Heart left ventricle (tissue), 16 donors: ENCODE measurements at regions of chr7 and their contacts with region 1.

Region 1: DNA sequence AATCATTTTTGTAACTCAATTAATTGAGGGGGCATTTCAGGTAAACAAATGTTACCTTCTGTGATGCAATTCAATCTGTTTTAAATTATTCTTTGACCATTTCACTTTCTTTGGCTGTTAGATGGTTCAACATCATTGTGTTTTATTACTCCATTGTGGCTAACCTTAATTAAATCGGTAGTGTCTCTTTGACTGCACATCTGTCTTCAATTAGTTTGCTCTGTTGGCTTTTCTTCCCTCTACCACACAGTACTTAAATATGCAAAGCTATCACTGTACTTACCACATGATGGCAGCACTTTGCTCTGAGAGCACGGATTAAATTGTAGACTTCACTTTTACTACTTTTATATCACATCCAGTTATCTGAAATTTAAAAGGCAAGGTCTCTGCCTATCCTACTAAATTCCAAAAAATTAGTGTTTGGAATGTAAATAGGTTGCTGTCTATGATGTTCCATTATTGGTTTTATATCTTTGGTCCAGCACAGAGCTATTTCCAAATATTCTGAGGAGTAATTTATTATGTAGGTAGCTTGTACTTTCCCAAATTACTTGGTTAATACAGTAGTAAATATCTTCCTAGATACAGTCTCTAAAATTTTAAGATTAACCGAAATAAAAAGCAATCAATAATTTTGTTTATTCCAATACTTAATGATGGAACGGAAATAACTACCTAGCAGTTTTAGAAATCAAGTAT is 352.0 kb downstream of the PCLO start:
- DNase-seq: no peak
- ATAC-seq: peak in 2 of 4 donors; percentile 55 to 61
- H3K4me3 ChIP-seq: no peak overlapping the region
- H3K27ac ChIP-seq: no peak overlapping the region
- H3K4me1 ChIP-seq: no peaks in the 10 kb centered on the region
- H3K27me3 ChIP-seq: no peaks in the 10 kb centered on the region
- CTCF ChIP-seq: peak; percentile 30 to 67 (median 47)
- POLR2A ChIP-seq: no peak

Region 2: DNA sequence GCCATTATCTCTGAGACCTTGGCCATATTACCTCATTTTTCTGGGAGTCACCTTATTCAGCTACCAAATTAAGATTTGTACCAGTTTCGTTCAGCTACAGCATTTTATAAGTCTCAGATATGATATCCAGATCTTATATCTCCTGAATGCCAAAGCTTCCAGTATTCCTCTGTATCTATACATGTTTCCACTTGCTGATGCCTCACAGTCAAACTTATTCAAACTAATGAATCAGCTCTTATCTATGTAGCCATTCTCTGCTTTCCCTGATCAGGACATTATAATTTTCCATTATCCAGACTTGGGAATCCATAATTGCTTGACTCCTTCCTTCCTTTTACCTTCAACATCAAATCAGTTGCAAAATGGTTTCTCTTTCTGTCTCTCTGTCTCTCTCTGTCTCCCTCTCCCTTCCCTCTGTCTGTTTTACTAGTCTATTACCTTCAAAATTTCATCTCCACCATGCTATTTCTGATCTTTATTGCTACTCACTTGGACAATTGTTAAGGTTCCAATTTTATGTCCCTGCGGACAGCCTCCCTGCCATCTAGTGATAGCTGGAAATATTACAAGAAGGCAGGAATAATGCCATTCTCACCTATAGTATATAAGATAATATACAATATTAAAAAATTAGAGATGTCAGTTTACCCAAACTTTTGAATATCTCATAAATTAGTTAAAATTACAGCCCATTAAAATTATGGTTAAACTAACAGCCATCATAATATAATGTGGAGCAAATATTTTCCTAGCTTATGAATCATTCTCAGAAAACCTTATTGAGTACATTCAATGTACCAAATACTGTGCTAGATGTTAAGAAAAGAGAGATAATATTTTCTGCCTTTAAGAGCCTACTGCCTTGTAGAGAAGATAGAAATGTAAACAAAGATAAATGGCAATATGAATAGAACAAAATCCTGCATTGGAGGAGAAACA is 262.1 kb after region 1 on chr7:
- intact Hi-C with region 1: loop called in 1 of 10 experiments (anchors 10 kb)
- DNase-seq: no peak
- ATAC-seq: no peak
- H3K4me3 ChIP-seq: no peak overlapping the region
- H3K27ac ChIP-seq: no peak overlapping the region
- H3K4me1 ChIP-seq: no peaks in the 10 kb centered on the region
- H3K27me3 ChIP-seq: no peaks in the 10 kb centered on the region
- CTCF ChIP-seq: peak in 3 of 12 donors; percentile 15 to 17 (median 16)
- POLR2A ChIP-seq: no peak

Region 3: DNA sequence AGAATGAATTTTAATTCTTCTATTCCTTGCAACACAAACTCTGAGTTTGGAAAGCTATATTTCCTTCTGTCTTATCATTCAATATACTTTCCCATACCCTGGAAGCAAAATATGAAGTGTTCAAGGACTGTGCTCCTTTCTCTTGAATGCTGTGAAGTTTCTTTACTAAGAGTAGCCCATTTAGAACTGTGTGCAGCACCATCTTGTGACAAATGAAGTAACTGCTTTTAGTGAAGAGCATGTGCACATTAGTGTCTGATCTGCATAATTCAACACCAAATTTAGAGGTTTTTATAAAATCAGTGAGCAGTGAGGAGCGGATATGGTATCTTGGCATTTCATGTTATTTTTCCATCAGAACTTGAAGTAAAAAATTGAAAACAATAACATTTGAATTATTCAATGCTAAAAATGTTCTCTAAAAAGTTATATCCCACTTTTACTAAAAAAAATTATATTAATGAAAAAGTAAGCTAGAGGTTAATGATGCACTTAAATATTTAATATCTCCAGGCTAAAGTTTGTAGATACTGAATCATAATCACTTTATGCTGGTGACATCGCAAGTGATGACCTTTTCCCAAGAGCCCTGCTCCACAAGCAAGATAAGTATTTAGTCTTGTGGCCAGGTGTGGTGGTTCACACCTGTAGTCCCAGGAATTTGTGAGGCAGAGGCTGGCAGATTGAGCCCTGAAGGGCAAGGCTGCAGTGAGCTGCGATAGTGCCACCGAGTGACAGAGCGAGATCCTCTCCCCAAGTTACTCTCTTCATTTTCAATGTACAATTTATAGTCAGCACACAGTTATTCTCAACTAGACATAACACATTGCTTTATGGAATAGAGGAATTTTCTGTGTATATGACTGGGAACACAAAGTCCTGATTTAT is 460.7 kb after region 1 on chr7:
- intact Hi-C with region 1: loop called in 9 of 10 experiments (anchors 2 to 10 kb)
- DNase-seq: no peak
- ATAC-seq: peak in 1 of 4 donors; percentile 47
- H3K4me3 ChIP-seq: no peak overlapping the region
- H3K27ac ChIP-seq: no peak overlapping the region
- H3K4me1 ChIP-seq: no peaks in the 10 kb centered on the region
- H3K27me3 ChIP-seq: no peaks in the 10 kb centered on the region
- CTCF ChIP-seq: peak in 8 of 12 donors; percentile 10 to 49 (median 34)
- POLR2A ChIP-seq: no peak

Region 4: DNA sequence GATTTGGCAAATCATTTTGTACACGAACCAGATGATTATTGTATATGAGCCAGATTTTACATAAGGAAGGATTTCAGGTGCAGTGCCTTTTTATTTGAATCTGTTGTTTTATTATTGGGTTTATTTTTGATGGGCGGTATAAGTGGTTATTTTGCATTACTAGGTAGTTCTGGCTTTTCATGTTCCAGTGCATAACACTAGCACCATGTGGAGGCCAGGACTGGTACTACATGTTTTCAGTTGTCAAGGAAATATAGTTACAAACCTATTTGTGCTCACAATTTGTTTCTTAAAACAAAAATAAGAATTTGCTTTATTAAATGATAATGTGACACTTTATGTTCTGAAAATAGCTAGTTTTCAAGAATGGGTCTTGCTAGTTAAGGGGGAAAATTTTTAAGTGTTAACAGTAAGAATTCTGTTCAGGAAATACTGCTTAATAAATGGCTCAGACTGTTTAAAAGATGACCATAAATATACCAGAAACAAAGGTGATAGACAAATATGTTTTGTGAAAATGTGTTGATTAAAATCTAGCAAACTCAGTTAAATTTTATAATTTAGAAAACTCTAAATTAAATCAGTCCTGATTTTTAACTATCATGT is 845.3 kb after region 1 on chr7:
- intact Hi-C with region 1: loop called in 1 of 10 experiments (anchors 10 kb)
- DNase-seq: no peak
- ATAC-seq: peak in 1 of 4 donors; percentile 41
- H3K4me3 ChIP-seq: no peak overlapping the region
- H3K27ac ChIP-seq: no peak overlapping the region
- H3K4me1 ChIP-seq: no peaks in the 10 kb centered on the region
- H3K27me3 ChIP-seq: no peaks in the 10 kb centered on the region
- CTCF ChIP-seq: peak; percentile 38 to 69 (median 56)
- POLR2A ChIP-seq: no peak